CD4-positive, alpha-beta memory T cell (primary cell): ENCODE measurements at regions of chr14 and their contacts with region 1.

Region 1: GRCh38 chr14:94036313-94037050 is 10.3 kb downstream of the OTUB2 start:
- DNase-seq: peak; percentile 63 to 73 (median 69)
- H3K4me3 ChIP-seq: no peak overlapping the region
- H3K4me3 Mint-ChIP-seq: peak overlapping the region in 1 of 8 donors; percentile 16
- H3K27ac ChIP-seq: no peak overlapping the region
- H3K27ac Mint-ChIP-seq: peak overlapping the region in 1 of 7 donors; percentile 47
- H3K4me1 ChIP-seq: no peaks in the 10 kb centered on the region
- H3K4me1 Mint-ChIP-seq: peaks cover 5 to 7% (median 6%) of the 10 kb centered on the region in 4 donors
- H3K27me3 ChIP-seq: no peaks in the 10 kb centered on the region
- H3K27me3 Mint-ChIP-seq: no peaks in the 10 kb centered on the region

Region 2: GRCh38 chr14:94011795-94012194 is 24.7 kb before region 1 on chr14:
- CTCF ChIA-PET with region 1: interaction called, 48 read pairs
- POLR2A ChIA-PET with region 1: no interaction called
- intact Hi-C with region 1: no loop called
- DNase-seq: peak; percentile 52 to 63 (median 56)
- H3K4me3 ChIP-seq: no peak overlapping the region
- H3K4me3 Mint-ChIP-seq: peak overlapping the region in 7 of 8 donors; percentile 38 to 74 (median 62)
- H3K27ac ChIP-seq: no peak overlapping the region
- H3K27ac Mint-ChIP-seq: peak overlapping the region in 4 of 7 donors; percentile 3 to 68 (median 56)
- H3K4me1 ChIP-seq: peaks cover 51% of the 10 kb centered on the region
- H3K4me1 Mint-ChIP-seq: peaks cover 34 to 58% (median 47%) of the 10 kb centered on the region in 4 donors
- H3K27me3 ChIP-seq: no peaks in the 10 kb centered on the region
- H3K27me3 Mint-ChIP-seq: no peaks in the 10 kb centered on the region

Region 3: GRCh38 chr14:94026173-94026888 is 10.2 kb before region 1 on chr14 and contains the start of gene OTUB2:
- CTCF ChIA-PET with region 1: interaction called, 48 read pairs
- POLR2A ChIA-PET with region 1: interaction called, 7 read pairs
- intact Hi-C with region 1: no loop called
- DNase-seq: peak; percentile 96 to 97 (median 97)
- H3K4me3 ChIP-seq: peak within 1 kb of the TSS in 1 of 2 donors; percentile 56
- H3K4me3 Mint-ChIP-seq: peak within 1 kb of the TSS; percentile 81 to 88 (median 84)
- H3K27ac ChIP-seq: peak within 1 kb of the TSS; percentile 13
- H3K27ac Mint-ChIP-seq: peak within 1 kb of the TSS in 6 of 7 donors; percentile 42 to 89 (median 74)
- H3K4me1 ChIP-seq: peaks cover 45% of the 10 kb centered on the region
- H3K4me1 Mint-ChIP-seq: peaks cover 30 to 55% (median 42%) of the 10 kb centered on the region in 4 donors
- H3K27me3 ChIP-seq: no peaks in the 10 kb centered on the region
- H3K27me3 Mint-ChIP-seq: no peaks in the 10 kb centered on the region
- total RNA-seq, gene OTUB2: 0.42 to 0.67 TPM

Region 4: DNA sequence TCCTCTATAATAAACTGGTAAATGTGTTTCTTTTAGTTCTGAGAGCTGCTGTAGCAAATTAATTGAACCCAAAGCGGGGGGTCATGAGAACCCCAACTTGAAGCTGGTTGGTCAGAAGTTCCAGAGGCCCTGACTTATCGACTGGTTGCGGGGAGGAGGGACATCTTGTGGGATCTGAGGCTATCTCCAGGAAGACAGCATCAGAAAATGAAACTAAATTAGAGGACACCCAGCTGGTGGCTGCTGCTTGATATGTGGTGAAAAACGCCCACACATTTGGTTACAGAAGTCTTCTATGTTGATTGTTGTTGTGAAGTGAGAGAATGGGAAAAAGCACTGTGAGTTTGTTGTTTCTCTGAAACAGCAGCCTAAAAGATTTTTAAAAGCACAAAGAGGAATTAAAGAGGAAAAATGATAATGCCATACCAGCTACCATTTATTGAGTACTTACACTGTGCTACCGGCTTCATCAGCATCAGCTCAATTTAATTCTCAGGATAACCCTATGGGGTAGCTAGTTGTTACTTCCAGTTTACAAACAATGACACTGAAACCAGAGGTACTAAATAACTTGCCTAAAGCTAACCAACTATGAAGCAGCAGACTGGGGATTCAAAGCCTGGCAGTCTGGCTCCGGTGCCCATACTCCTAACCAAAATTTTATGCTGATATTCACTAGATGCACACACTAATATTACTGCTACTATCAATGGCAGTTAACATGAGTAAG is 20.3 kb after region 1 on chr14:
- CTCF ChIA-PET with region 1: interaction called, 23 read pairs
- POLR2A ChIA-PET with region 1: no interaction called
- intact Hi-C with region 1: no loop called
- DNase-seq: peak in 2 of 5 donors; percentile 22 to 42
- H3K4me3 ChIP-seq: no peak overlapping the region
- H3K4me3 Mint-ChIP-seq: peak overlapping the region in 5 of 8 donors; percentile 4 to 63 (median 22)
- H3K27ac ChIP-seq: peak overlapping the region; percentile 18
- H3K27ac Mint-ChIP-seq: peak overlapping the region; percentile 36 to 85 (median 77)
- H3K4me1 ChIP-seq: peaks cover 54% of the 10 kb centered on the region
- H3K4me1 Mint-ChIP-seq: peaks cover 47 to 86% (median 59%) of the 10 kb centered on the region in 4 donors
- H3K27me3 ChIP-seq: no peaks in the 10 kb centered on the region
- H3K27me3 Mint-ChIP-seq: no peaks in the 10 kb centered on the region

Region 5: GRCh38 chr14:94129111-94129757 is 92.8 kb after region 1 on chr14 and contains the start of gene IFI27L2:
- CTCF ChIA-PET with region 1: interaction called, 142 read pairs
- POLR2A ChIA-PET with region 1: interaction called, 4 read pairs
- intact Hi-C with region 1: loop called (anchors 1 kb)
- DNase-seq: peak; percentile 34 to 80 (median 46)
- H3K4me3 ChIP-seq: peak within 1 kb of the TSS; percentile 50 to 82
- H3K4me3 Mint-ChIP-seq: peak within 1 kb of the TSS; percentile 86 to 93 (median 90)
- H3K27ac ChIP-seq: peak within 1 kb of the TSS; percentile 46
- H3K27ac Mint-ChIP-seq: peak within 1 kb of the TSS; percentile 77 to 88 (median 84)
- H3K4me1 ChIP-seq: peaks cover 18% of the 10 kb centered on the region
- H3K4me1 Mint-ChIP-seq: peaks cover 12 to 25% (median 20%) of the 10 kb centered on the region in 4 donors
- H3K27me3 ChIP-seq: no peaks in the 10 kb centered on the region
- H3K27me3 Mint-ChIP-seq: no peaks in the 10 kb centered on the region
- total RNA-seq, gene IFI27L2: 34.0 to 38.2 TPM

Region 6: DNA sequence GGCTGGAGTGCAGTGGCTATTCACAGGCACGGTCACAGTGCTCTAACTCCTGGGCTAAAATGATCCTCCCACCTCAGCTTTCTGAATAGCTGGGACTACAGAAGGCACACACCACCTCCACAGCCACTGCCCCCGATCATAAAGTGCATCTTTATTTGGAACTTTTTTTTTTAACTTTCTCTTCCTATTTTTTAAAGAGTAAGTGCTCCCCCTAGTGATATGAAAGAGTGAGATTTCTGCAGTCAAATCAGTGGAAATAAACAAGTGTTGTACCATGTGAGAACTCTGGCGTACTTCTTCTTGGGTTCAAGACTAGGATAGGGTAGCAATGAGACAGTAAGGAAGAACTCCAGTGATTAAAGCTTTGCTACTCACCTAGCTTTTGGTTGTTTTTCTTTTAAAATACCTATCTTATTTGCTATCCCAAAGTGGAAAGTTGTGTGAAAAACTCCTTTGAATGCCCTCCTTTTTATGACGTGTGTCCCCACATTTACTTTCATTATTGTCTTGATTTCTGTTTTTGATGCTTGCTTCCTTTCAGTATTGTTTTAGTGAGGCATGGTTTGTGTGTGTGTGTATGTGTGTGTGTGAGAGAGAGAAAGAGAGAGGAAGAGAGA is 144.3 kb after region 1 on chr14:
- CTCF ChIA-PET with region 1: interaction called, 107 read pairs
- POLR2A ChIA-PET with region 1: interaction called, 3 read pairs
- intact Hi-C with region 1: loop called (anchors 1 kb)
- DNase-seq: peak; percentile 68 to 81 (median 73)
- H3K4me3 ChIP-seq: peak overlapping the region in 1 of 2 donors; percentile 46
- H3K4me3 Mint-ChIP-seq: peak overlapping the region; percentile 2 to 79 (median 58)
- H3K27ac ChIP-seq: peak overlapping the region; percentile 29
- H3K27ac Mint-ChIP-seq: peak overlapping the region; percentile 18 to 91 (median 66)
- H3K4me1 ChIP-seq: peaks cover 10% of the 10 kb centered on the region
- H3K4me1 Mint-ChIP-seq: peaks cover 10 to 23% (median 16%) of the 10 kb centered on the region in 4 donors
- H3K27me3 ChIP-seq: peaks cover 2% of the 10 kb centered on the region
- H3K27me3 Mint-ChIP-seq: peaks cover 2 to 6% of the 10 kb centered on the region in 2 donors